CD4-positive, alpha-beta T cell (primary cell): ENCODE measurements at regions of chr15 and their contacts with region 1.

Region 1: GRCh38 chr15:85330901-85331588 is 49.4 kb upstream of the AKAP13 start:
- DNase-seq: peak; percentile 46 to 88 (median 60)
- ATAC-seq: peak; percentile 71
- H3K4me3 ChIP-seq: peak overlapping the region; percentile 47
- H3K4me3 Mint-ChIP-seq: peak overlapping the region; percentile 96
- H3K27ac ChIP-seq: peak overlapping the region; percentile 43 to 60
- H3K27ac Mint-ChIP-seq: peak overlapping the region; percentile 85
- H3K4me1 ChIP-seq: peaks cover 30% of the 10 kb centered on the region
- H3K4me1 Mint-ChIP-seq: peaks cover 58% of the 10 kb centered on the region
- H3K27me3 ChIP-seq: no peaks in the 10 kb centered on the region
- H3K27me3 Mint-ChIP-seq: no peaks in the 10 kb centered on the region
- CTCF ChIP-seq: peak; percentile 57

Region 2: DNA sequence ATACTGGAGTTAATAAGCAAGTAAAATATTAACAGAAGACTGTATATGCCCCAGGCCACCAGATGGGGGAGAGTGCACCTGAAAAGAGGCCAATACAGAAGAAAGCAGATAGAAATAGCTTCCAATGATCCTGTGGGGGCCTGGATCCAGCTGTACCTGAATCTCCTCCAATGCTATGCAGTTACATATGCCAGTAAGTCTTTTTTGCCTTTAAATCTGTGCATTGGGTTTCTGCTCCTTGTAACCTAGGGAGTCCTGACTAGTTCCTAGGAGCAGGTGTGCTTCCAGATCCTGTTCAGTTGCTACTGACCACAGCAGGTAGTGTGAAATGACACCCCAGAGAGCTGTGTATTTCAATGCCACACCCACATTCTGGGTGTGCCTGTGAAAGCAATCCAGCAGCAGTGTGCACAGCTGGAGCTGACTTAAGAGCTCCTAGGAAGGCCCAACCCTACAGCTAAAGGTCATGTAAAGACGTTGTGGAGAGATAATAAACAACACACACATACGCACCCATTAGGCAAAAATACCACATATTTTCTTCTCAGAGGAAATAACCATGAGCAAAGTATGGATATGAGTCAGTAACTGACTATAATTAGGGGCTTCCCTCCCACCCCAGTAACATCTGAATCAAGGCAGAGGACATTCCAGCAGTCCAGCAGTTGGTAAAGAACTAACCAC is 12.9 kb before region 1 on chr15:
- CTCF ChIA-PET with region 1: interaction called, 23 read pairs
- POLR2A ChIA-PET with region 1: interaction called, 24 read pairs
- intact Hi-C with region 1: no loop called
- DNase-seq: peak in 4 of 14 experiments; percentile 27 to 37 (median 32)
- ATAC-seq: peak; percentile 73
- H3K4me3 ChIP-seq: no peak overlapping the region
- H3K4me3 Mint-ChIP-seq: no peak overlapping the region
- H3K27ac ChIP-seq: no peak overlapping the region
- H3K27ac Mint-ChIP-seq: peak overlapping the region; percentile 62
- H3K4me1 ChIP-seq: peaks cover 29% of the 10 kb centered on the region
- H3K4me1 Mint-ChIP-seq: peaks cover 45% of the 10 kb centered on the region
- H3K27me3 ChIP-seq: no peaks in the 10 kb centered on the region
- H3K27me3 Mint-ChIP-seq: no peaks in the 10 kb centered on the region
- CTCF ChIP-seq: no peak

Region 3: GRCh38 chr15:85412956-85413854 is 82.2 kb after region 1 on chr15:
- CTCF ChIA-PET with region 1: interaction called, 29 read pairs
- POLR2A ChIA-PET with region 1: interaction called, 39 read pairs
- intact Hi-C with region 1: loop called (anchors 2 to 10 kb)
- DNase-seq: peak; percentile 45 to 89 (median 66)
- ATAC-seq: peak; percentile 96
- H3K4me3 ChIP-seq: no peak overlapping the region
- H3K4me3 Mint-ChIP-seq: peak overlapping the region; percentile 52
- H3K27ac ChIP-seq: peak overlapping the region; percentile 51 to 68
- H3K27ac Mint-ChIP-seq: peak overlapping the region; percentile 82
- H3K4me1 ChIP-seq: peaks cover 14% of the 10 kb centered on the region
- H3K4me1 Mint-ChIP-seq: peaks cover 64% of the 10 kb centered on the region
- H3K27me3 ChIP-seq: no peaks in the 10 kb centered on the region
- H3K27me3 Mint-ChIP-seq: no peaks in the 10 kb centered on the region
- CTCF ChIP-seq: no peak